Activated naive CD4-positive, alpha-beta T cell treated with anti-CD3 and anti-CD28 coated beads for 36 hours (primary cell): ENCODE measurements at regions of chr1 and their contacts with region 1.

Region 1: DNA sequence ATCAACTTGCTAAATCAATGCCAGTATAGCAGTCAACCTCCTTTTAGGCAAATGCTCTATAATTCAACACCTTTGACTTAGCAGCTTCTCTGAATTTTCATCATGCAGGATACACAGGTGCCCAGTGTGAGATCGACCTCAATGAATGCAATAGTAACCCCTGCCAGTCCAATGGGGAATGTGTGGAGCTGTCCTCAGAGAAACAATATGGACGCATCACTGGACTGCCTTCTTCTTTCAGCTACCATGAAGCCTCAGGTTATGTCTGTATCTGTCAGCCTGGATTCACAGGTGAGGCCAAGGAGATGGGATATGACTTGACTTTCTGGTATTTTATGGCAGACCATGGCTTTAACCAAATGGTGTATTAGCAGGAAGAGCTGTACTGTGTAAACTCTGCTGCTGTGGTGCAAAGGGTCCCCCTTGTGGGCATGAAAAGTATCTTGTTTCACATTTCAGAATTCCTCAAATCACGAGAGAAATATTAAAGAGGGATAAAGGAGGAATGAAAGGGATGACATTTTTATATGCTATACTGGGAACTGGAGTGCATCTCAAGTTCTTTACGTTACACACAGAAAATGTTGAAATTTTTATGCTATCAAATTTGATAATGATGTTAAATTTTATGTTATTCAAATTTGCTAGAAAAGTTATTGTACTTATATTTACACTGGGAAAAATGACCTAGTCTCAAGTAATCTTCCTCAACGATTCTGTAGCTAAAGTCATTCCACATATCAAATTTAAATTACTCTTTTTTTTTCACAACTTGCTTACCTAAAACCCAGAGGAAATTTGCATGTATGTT is 88.9 kb downstream of the CRB1 start:
- DNase-seq: peak; percentile 29
- H3K4me3 Mint-ChIP-seq: no peak overlapping the region
- H3K27ac Mint-ChIP-seq: no peak overlapping the region
- H3K4me1 Mint-ChIP-seq: no peaks in the 10 kb centered on the region
- H3K27me3 Mint-ChIP-seq: no peaks in the 10 kb centered on the region

Region 2: DNA sequence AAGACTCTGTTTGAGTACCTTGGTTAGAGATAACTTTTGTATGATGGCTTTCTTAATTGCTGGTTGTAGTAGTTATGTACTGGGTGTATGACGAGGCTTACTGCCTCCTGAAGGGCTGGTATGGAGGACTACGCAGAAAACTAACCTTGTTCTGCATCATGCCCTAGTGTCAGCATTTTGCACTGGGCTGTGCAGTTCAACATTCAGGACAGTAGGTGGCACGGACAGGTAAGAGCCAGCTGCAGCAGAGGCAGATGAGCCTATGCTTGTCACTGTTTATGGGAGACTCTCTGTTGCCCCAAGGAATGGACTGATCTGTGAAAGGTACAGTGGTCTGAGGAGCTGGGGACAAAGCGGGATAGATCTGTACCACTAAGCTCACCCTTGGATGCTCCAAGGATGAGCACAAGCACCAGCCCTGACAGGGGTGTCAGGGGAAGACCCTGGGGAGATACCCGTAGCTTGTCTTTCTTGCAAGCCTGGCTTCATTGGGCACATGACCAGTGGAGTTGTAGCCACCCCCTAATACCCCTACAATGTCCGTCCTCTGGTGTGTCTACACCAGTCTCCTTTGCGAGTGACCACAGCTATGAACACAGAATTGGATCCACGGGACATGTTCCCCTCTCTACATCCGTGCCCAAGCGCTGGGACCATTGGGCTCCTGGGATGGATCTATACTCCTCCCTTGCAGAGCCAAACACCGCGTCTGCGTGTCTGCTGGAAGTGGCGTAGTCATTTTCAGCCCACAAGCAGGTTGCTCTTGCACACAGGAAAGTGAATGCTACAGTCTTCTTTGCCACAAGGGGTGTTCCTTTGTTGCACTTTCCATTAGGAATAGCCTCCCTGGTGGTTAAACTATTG is 633.4 kb before region 1 on chr1:
- CTCF ChIA-PET with region 1: no interaction called
- intact Hi-C with region 1: loop called (anchors 10 kb)
- DNase-seq: peak; percentile 55
- H3K4me3 Mint-ChIP-seq: no peak overlapping the region
- H3K27ac Mint-ChIP-seq: no peak overlapping the region
- H3K4me1 Mint-ChIP-seq: no peaks in the 10 kb centered on the region
- H3K27me3 Mint-ChIP-seq: peaks cover 1% of the 10 kb centered on the region

Region 3: GRCh38 chr1:197180252-197180878 is 176.6 kb before region 1 on chr1:
- CTCF ChIA-PET with region 1: interaction called, 45 read pairs
- intact Hi-C with region 1: loop called (anchors 1 kb)
- DNase-seq: no peak
- H3K4me3 Mint-ChIP-seq: no peak overlapping the region
- H3K27ac Mint-ChIP-seq: no peak overlapping the region
- H3K4me1 Mint-ChIP-seq: no peaks in the 10 kb centered on the region
- H3K27me3 Mint-ChIP-seq: no peaks in the 10 kb centered on the region

Region 4: DNA sequence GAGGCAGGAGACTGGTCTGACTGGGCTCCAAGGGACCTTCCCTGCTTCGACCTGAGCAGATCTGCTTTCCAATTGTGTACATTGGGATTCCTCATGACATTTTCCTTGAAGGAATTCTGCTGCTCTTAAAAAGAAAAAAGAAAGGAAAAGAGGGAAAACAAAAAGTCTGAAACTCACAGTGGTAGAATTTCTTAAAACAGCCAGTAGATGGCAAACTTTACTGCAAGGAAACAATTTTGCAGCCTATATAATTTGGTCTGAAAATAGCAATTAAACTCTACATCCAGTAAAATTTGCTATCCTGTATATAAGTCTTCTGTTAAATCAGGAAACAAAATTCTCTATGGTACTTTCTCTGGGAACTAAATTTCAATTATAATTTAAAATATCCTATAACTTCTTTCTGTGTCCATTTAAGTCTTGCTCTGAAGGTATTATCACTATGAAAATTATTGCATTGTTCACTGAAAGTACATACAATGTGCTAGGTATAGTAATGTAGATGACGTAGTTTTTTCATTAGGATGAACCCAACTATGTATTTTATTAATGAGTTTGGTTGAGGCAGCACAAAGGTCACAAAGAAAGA is 29.1 kb before region 1 on chr1:
- CTCF ChIA-PET with region 1: interaction called, 9 read pairs
- intact Hi-C with region 1: loop called (anchors 2 kb)
- DNase-seq: no peak
- H3K4me3 Mint-ChIP-seq: no peak overlapping the region
- H3K27ac Mint-ChIP-seq: no peak overlapping the region
- H3K4me1 Mint-ChIP-seq: no peaks in the 10 kb centered on the region
- H3K27me3 Mint-ChIP-seq: no peaks in the 10 kb centered on the region

Region 5: DNA sequence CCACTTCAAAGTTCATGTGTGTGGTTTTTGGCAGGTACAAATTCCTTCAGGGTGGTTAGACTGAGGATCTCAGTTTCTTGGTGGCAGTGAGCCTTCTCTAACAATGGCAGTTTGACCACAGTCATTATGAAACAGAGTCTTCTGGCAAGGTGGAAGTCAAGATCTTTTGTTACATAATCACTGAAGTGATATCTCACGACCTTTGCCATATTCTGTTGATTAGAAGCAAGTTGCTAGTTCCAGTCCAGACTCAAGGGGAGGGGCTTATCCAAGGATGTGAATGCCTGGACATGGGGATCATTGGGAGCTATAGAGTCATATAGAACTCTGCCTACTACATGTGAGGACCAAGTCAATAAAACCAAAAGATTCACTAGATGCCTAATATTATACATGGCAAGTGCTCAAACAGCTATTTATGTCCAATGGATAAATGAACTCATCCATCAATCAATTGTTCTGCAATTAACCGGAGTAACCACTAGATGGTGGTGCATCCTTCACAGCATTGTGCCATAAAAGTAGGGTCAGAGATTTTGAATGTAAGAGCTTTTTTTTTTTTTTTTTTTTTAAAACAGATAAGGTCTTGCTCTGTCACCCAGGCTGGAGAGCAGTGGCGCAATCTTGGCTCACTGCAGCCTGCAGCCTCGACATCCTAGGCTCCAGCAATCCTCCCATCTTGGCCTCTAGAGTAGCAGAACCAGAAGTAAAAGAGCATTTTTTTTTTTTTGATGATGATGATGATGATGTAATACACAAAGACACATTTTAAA is 43.0 kb after region 1 on chr1:
- CTCF ChIA-PET with region 1: no interaction called
- intact Hi-C with region 1: no loop called
- DNase-seq: peak; percentile 28
- H3K4me3 Mint-ChIP-seq: peak overlapping the region; percentile 32
- H3K27ac Mint-ChIP-seq: no peak overlapping the region
- H3K4me1 Mint-ChIP-seq: no peaks in the 10 kb centered on the region
- H3K27me3 Mint-ChIP-seq: no peaks in the 10 kb centered on the region